ENCODE measurements at regions of chr16 and their contacts with region 1.

Region 1: GRCh38 chr16:2009789-2010510 is at the start of gene ZNF598:
- DNase-seq: peak; percentile 90
- ATAC-seq: peak; percentile 93
- H3K4me3 Mint-ChIP-seq: peak within 1 kb of the TSS; percentile 95
- H3K27ac Mint-ChIP-seq: peak within 1 kb of the TSS; percentile 90
- H3K4me1 Mint-ChIP-seq: peaks cover 35% of the 10 kb centered on the region
- H3K27me3 Mint-ChIP-seq: no peaks in the 10 kb centered on the region
- total RNA-seq, gene ZNF598: 64.6 to 69.8 TPM

Region 2: GRCh38 chr16:1640261-1640941 is 369.5 kb before region 1 on chr16:
- CTCF ChIA-PET with region 1: no interaction called
- POLR2A ChIA-PET with region 1: no interaction called
- intact Hi-C with region 1: no loop called
- DNase-seq: no peak
- ATAC-seq: no peak
- H3K4me3 Mint-ChIP-seq: no peak overlapping the region
- H3K27ac Mint-ChIP-seq: no peak overlapping the region
- H3K4me1 Mint-ChIP-seq: peaks cover 7% of the 10 kb centered on the region
- H3K27me3 Mint-ChIP-seq: no peaks in the 10 kb centered on the region

Region 3: GRCh38 chr16:1782352-1783091 is 227.4 kb before region 1 on chr16 and contains the starts of genes NUBP2 and SPSB3:
- CTCF ChIA-PET with region 1: no interaction called
- POLR2A ChIA-PET with region 1: no interaction called
- intact Hi-C with region 1: loop called in 1 of 2 experiments (anchors 1 kb)
- DNase-seq: peak; percentile 99
- ATAC-seq: peak; percentile 93
- H3K4me3 Mint-ChIP-seq: peak within 1 kb of the TSS; percentile 94
- H3K27ac Mint-ChIP-seq: peak within 1 kb of the TSS; percentile 85
- H3K4me1 Mint-ChIP-seq: peaks cover 26% of the 10 kb centered on the region
- H3K27me3 Mint-ChIP-seq: no peaks in the 10 kb centered on the region
- total RNA-seq, gene NUBP2: 34.4 to 42.4 TPM
- total RNA-seq, gene SPSB3: 12.5 to 13.6 TPM

Region 4: GRCh38 chr16:1971796-1972489 is 38.0 kb before region 1 on chr16 and contains the start of gene TBL3:
- CTCF ChIA-PET with region 1: no interaction called
- POLR2A ChIA-PET with region 1: no interaction called
- intact Hi-C with region 1: loop called in 1 of 2 experiments (anchors 1 kb)
- DNase-seq: peak; percentile 98
- ATAC-seq: peak; percentile 97
- H3K4me3 Mint-ChIP-seq: peak within 1 kb of the TSS; percentile 99
- H3K27ac Mint-ChIP-seq: peak within 1 kb of the TSS; percentile 99
- H3K4me1 Mint-ChIP-seq: peaks cover 16% of the 10 kb centered on the region
- H3K27me3 Mint-ChIP-seq: no peaks in the 10 kb centered on the region
- total RNA-seq, gene TBL3: 47.4 to 48.6 TPM

Region 5: GRCh38 chr16:2023098-2023925 is 13.4 kb after region 1 on chr16:
- CTCF ChIA-PET with region 1: interaction called, 8 read pairs
- POLR2A ChIA-PET with region 1: no interaction called
- intact Hi-C with region 1: loop called (anchors 1 kb)
- DNase-seq: peak; percentile 97
- ATAC-seq: peak; percentile 86
- H3K4me3 Mint-ChIP-seq: peak overlapping the region; percentile 46
- H3K27ac Mint-ChIP-seq: no peak overlapping the region
- H3K4me1 Mint-ChIP-seq: peaks cover 15% of the 10 kb centered on the region
- H3K27me3 Mint-ChIP-seq: peaks cover 27% of the 10 kb centered on the region

Region 6: DNA sequence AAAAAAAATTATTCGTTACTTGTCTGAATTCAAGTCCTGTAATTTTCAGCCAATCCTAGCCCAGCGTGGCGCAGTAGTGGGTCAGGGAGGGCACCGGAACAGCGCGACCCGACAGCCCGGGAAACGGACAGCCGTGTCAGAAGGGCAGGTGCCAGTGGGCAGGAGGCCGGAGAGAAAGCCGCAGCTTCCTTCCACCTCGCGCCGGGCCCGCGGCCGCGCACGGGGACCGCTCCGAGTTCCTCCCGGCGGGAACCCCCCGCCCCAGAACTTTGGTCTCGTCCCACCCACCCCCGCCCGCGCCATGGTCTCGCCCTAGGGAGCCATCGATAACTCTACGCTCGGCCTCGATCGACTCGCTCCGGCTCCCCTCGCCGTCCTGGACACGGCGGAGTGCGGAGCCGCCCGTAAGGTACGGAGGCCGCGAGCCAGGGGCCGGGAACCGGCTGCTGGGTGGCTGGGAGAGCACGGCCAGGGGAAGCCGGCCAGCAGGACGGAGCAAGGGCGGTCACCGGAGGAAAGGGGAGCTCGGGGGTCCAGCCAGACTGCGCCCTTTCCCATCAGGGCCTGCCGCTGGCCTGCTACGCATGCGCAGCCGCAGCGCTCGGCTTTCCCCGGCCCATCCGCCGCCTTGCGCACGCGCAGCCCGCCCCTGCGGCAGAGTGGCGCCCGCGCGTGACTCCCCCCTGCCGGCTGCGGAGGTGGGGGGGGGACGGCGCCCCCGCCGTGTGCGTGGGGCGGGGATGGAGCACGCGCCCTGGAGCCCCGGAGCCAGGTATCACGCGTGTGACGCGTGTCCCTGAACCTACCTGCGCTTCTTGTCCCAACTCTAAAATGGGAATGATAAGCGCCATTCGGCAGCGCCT is 195.4 kb after region 1 on chr16 and contains the start of gene MLST8:
- CTCF ChIA-PET with region 1: no interaction called
- POLR2A ChIA-PET with region 1: no interaction called
- intact Hi-C with region 1: loop called in 1 of 2 experiments (anchors 5 kb)
- DNase-seq: peak; percentile 92
- ATAC-seq: peak; percentile 84
- H3K4me3 Mint-ChIP-seq: peak within 1 kb of the TSS; percentile 83
- H3K27ac Mint-ChIP-seq: peak within 1 kb of the TSS; percentile 84
- H3K4me1 Mint-ChIP-seq: peaks cover 16% of the 10 kb centered on the region
- H3K27me3 Mint-ChIP-seq: no peaks in the 10 kb centered on the region
- total RNA-seq, gene MLST8: 61.3 to 76.1 TPM

Measured in activated CD4-positive, alpha-beta T cell treated with anti-CD3 and anti-CD28 coated beads for 36 hours (primary cell).